Activated CD4-positive, alpha-beta T cell treated with anti-CD3 and anti-CD28 coated beads for 36 hours (primary cell): ENCODE measurements at regions of chr5 and their contacts with region 1.

Region 1: DNA sequence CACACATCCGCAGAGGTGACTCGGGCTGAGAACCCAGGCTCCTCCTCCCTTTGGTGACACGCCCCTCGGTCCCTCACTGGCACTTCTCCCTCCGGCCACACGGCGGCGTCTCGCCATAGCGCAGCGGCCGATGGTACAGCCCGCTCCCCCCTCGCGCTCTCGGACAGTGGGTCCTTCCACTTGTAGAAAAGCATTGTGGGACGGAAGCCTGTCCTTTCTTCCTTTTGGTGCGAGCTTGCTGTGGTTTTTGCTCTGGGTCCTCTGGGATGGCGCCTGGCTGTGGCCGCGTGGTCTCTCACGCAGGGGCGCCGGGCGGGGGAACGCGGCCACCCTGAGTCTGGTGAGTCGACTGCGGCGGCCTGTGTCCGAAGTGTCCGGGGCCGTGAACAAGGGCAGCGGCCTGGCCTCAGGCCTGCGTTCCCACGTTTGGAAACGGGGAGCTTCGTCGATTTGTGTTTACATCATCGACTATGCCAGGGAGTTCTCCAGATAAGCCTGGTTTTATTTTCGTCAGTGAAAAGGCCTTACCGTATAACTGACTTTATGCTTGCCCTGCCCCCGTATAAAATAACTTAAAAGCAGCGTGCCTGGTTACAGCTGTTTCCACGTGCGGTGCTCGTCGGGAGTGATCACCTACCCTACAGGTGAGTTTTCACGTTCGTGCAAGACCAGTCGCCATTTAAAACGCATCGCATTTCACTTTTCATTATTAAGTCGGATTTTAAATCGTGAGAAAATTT is 258.3 kb downstream of the EPB41L4A start:
- DNase-seq: peak; percentile 95
- ATAC-seq: peak; percentile 90
- H3K4me3 Mint-ChIP-seq: peak overlapping the region; percentile 91
- H3K27ac Mint-ChIP-seq: peak overlapping the region; percentile 92
- H3K4me1 Mint-ChIP-seq: peaks cover 44% of the 10 kb centered on the region
- H3K27me3 Mint-ChIP-seq: no peaks in the 10 kb centered on the region

Region 2: GRCh38 chr5:110738812-110739651 is 1421.8 kb before region 1 on chr5 and contains the start of gene SLC25A46:
- CTCF ChIA-PET with region 1: no interaction called
- POLR2A ChIA-PET with region 1: no interaction called
- intact Hi-C with region 1: loop called in 1 of 2 experiments (anchors 1 kb)
- DNase-seq: peak; percentile 92
- ATAC-seq: peak; percentile 89
- H3K4me3 Mint-ChIP-seq: peak within 1 kb of the TSS; percentile 87
- H3K27ac Mint-ChIP-seq: peak within 1 kb of the TSS; percentile 91
- H3K4me1 Mint-ChIP-seq: peaks cover 17% of the 10 kb centered on the region
- H3K27me3 Mint-ChIP-seq: peaks cover 4% of the 10 kb centered on the region
- total RNA-seq, gene SLC25A46: 32.3 to 35.3 TPM

Region 3: GRCh38 chr5:110996742-110997141 is 1164.1 kb before region 1 on chr5:
- CTCF ChIA-PET with region 1: no interaction called
- POLR2A ChIA-PET with region 1: no interaction called
- intact Hi-C with region 1: no loop called
- DNase-seq: no peak
- ATAC-seq: no peak
- H3K4me3 Mint-ChIP-seq: no peak overlapping the region
- H3K27ac Mint-ChIP-seq: no peak overlapping the region
- H3K4me1 Mint-ChIP-seq: no peaks in the 10 kb centered on the region
- H3K27me3 Mint-ChIP-seq: peaks cover 9% of the 10 kb centered on the region

Region 4: GRCh38 chr5:111337688-111338087 is 823.1 kb before region 1 on chr5:
- CTCF ChIA-PET with region 1: no interaction called
- POLR2A ChIA-PET with region 1: no interaction called
- intact Hi-C with region 1: loop called in 1 of 2 experiments (anchors 1 kb)
- DNase-seq: no peak
- ATAC-seq: peak; percentile 88
- H3K4me3 Mint-ChIP-seq: peak overlapping the region; percentile 20
- H3K27ac Mint-ChIP-seq: peak overlapping the region; percentile 87
- H3K4me1 Mint-ChIP-seq: peaks cover 77% of the 10 kb centered on the region
- H3K27me3 Mint-ChIP-seq: no peaks in the 10 kb centered on the region

Region 5: DNA sequence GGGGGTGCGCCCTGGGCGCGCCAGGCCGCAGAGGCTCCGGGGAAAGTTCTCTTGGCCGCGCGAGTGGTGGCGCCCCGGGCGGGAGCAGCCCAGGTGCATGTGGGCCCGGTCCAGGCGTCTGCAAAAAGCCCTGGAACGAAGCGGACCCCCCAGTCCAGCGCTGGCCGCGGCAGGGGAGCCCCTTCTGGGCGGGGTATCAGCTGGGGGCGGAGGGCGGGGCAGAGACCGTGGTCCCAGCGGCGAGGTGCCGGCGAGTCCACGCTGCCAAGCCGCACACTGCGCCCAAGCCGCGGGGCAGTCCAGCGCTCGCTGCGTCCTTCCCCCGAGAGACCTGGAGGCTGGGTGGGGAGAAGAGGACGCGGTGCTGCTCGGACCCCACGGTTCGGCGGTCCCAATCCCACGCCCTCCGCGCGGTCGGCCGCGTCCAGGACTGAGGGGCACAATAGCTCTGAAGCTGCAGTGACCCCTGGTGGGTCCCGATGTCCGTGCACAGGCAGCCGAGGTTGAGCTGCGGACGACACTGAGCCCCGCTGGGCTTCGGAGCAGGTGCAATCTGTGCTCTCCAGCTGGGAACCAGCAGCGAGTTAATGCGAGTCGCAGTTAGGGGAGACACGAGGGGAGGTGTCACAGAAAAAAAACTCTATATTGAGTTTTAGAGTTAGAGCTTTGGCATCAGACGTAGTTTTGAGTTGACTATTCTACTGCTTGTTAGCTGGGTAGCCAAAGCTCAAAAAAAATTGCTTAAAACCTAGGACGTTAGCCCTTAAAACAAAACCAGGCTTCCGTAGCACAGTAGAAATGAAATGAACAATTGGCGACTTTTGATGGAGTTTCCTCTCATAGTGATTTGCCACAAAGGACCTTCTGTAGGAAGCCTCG is 259.4 kb after region 1 on chr5:
- CTCF ChIA-PET with region 1: no interaction called
- POLR2A ChIA-PET with region 1: no interaction called
- intact Hi-C with region 1: loop called in 1 of 2 experiments (anchors 5 kb)
- DNase-seq: peak; percentile 71
- ATAC-seq: peak; percentile 68
- H3K4me3 Mint-ChIP-seq: peak overlapping the region; percentile 63
- H3K27ac Mint-ChIP-seq: no peak overlapping the region
- H3K4me1 Mint-ChIP-seq: peaks cover 10% of the 10 kb centered on the region
- H3K27me3 Mint-ChIP-seq: peaks cover 45% of the 10 kb centered on the region

Region 6: DNA sequence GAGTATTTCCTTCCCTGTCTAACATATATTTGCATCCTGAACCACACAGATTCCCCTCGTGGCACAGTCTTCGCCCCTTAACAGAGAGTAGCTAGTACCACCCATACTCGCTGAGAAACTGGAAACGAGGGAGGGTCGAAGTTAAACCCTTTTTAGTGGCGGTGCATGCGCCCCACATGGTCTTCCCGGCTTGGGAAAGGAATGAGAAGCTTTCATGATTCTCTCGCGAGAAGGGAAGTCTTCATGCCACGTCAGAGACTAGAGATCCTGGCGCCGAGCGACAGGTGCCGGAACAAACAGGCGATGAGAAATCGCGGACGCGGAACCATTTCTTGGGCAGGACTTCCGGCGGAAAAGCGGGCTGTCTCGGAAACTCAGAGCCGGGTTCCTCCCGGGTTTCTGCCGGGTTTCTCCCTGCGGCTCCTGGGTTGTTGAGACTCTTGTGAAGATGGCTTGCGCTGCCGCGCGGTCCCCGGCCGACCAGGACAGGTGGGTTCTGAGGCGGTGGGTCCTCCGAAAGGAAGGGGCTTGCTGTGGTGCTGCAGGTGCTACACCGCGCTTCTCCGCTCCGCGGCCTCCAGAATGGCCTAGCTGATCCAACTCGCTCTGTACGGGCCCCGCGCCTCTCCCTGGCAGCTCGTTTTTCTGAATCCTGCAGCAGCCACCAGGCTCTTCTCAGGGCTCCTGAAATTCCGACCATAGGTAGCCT is 700.3 kb after region 1 on chr5 and contains the start of gene SRP19:
- CTCF ChIA-PET with region 1: no interaction called
- POLR2A ChIA-PET with region 1: no interaction called
- intact Hi-C with region 1: loop called in 1 of 2 experiments (anchors 10 kb)
- DNase-seq: peak; percentile 95
- ATAC-seq: peak; percentile 95
- H3K4me3 Mint-ChIP-seq: peak within 1 kb of the TSS; percentile 97
- H3K27ac Mint-ChIP-seq: peak within 1 kb of the TSS; percentile 98
- H3K4me1 Mint-ChIP-seq: peaks cover 32% of the 10 kb centered on the region
- H3K27me3 Mint-ChIP-seq: peaks cover 9% of the 10 kb centered on the region
- total RNA-seq, gene SRP19: 47.6 to 49.4 TPM

Region 7: GRCh38 chr5:113513384-113514288 is 1352.8 kb after region 1 on chr5 and contains the start of gene YTHDC2:
- CTCF ChIA-PET with region 1: no interaction called
- POLR2A ChIA-PET with region 1: no interaction called
- intact Hi-C with region 1: loop called in 1 of 2 experiments (anchors 10 kb)
- DNase-seq: peak; percentile 94
- ATAC-seq: peak; percentile 98
- H3K4me3 Mint-ChIP-seq: peak within 1 kb of the TSS; percentile 86
- H3K27ac Mint-ChIP-seq: peak within 1 kb of the TSS; percentile 82
- H3K4me1 Mint-ChIP-seq: peaks cover 35% of the 10 kb centered on the region
- H3K27me3 Mint-ChIP-seq: peaks cover 6% of the 10 kb centered on the region
- total RNA-seq, gene YTHDC2: 19.0 to 28.7 TPM